Posterior vena cava (tissue), 2 donors: ENCODE measurements at regions of chr10 and their contacts with region 1.

Region 1: DNA sequence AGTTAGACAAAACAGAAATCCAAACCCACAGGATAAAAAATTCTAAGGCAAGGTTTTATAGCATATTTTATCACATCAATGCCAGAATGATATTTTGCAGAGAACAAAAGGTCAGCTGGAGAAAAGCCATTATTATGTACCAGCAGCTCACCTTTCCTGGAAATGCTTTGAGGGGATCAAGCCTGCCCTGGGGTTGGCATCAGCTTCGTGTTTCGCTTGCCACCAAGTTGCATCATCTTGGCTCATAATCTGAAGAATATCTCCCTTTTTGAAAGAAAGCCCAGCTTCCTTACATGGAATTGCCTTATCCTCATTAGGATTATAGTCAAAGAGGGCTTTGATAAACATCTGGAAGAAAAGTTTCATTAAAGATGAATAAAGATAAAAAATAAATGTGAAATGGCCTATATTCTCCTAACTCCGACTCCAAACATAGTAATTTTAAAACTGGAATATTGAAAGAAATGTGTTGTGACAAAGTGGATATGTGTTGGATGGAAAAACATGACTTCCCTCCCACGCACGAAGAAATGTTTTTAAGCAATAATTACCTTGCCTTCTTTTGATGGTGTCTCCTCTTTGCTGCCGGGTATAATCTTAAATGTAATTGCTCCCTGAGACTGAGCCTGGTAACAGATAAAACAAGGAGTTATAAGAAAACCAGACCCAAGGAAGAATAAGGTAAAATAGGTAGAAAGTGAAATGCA is 121.3 kb upstream of the ODAD2 start:
- DNase-seq: no peak

Region 2: GRCh38 chr10:28054228-28054837 is 65.9 kb before region 1 on chr10:
- intact Hi-C with region 1: loop called in 1 of 2 experiments (anchors 10 kb)
- DNase-seq: no peak

Region 3: GRCh38 chr10:28077889-28078288 is 42.3 kb before region 1 on chr10:
- intact Hi-C with region 1: no loop called
- DNase-seq: no peak

Region 4: GRCh38 chr10:28139138-28139537 is 18.9 kb after region 1 on chr10:
- intact Hi-C with region 1: no loop called
- DNase-seq: no peak

Region 5: GRCh38 chr10:28334296-28334695 is 214.1 kb after region 1 on chr10:
- intact Hi-C with region 1: no loop called
- DNase-seq: no peak